WTC11 (cell line): ENCODE measurements at regions of chr5 and their contacts with region 1.

Region 1: GRCh38 chr5:138352071-138352721 is at the start of gene KDM3B:
- DNase-seq: peak; percentile 94
- ATAC-seq: peak; percentile 76
- H3K4me3 Mint-ChIP-seq: peak within 1 kb of the TSS; percentile 92
- H3K27ac Mint-ChIP-seq: peak within 1 kb of the TSS; percentile 94
- H3K4me1 Mint-ChIP-seq: peaks cover 23% of the 10 kb centered on the region
- H3K27me3 Mint-ChIP-seq: no peaks in the 10 kb centered on the region
- CTCF ChIP-seq: peak; percentile 100
- total RNA-seq, gene KDM3B: 86.2 to 89.0 TPM (median 87.9 TPM) in 3 replicates

Region 2: DNA sequence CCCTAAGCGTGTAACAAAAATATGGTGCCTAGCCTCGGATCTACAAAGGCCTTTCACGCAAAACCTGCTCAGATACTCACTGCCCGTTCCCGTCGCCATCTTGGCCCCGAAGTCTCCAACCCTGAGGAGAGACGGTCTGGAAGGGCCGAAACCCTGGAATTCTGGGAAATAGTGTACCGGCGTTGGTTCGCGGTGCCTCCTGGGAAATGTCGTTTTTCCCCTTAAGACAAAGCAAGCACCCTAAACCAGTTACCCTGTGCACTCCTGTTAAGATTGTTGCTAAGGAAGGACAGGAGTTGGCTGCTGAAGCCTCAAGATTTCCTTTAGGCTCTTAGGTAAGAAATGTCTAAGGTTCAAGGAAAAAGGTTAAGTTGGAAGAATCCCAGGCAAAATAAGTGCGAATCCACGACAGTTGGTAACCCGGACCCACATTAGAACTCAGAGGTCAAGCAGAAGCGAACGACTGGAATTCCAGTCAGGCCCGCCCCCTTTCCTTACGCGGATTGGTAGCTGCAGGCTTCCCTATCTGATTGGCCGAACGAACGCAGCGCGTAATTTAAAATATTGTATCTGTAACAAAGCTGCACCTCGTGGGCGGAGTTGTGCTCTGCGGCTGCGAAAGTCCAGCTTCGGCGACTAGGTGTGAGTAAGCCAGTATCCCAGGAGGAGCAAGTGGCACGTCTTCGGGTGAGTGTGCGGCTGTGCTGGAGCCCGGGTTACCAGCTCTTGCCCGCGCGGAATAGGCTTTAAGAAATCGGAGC is 173.5 kb before region 1 on chr5 and contains the starts of genes BRD8 and KIF20A:
- CTCF ChIA-PET with region 1: interaction called, 34 read pairs
- POLR2A ChIA-PET with region 1: interaction called, 10 read pairs
- DNase-seq: peak; percentile 96
- ATAC-seq: peak; percentile 92
- H3K4me3 Mint-ChIP-seq: no peak within 1 kb of the TSS
- H3K27ac Mint-ChIP-seq: peak within 1 kb of the TSS; percentile 63; the same call in 1 of the 2 replicates
- H3K4me1 Mint-ChIP-seq: peaks cover 13% of the 10 kb centered on the region
- H3K27me3 Mint-ChIP-seq: no peaks in the 10 kb centered on the region
- CTCF ChIP-seq: no peak
- total RNA-seq, gene BRD8: 59.6 to 73.4 TPM (median 61.4 TPM) in 3 replicates
- total RNA-seq, gene KIF20A: 66.9 to 81.9 TPM (median 68.0 TPM) in 3 replicates

Region 3: DNA sequence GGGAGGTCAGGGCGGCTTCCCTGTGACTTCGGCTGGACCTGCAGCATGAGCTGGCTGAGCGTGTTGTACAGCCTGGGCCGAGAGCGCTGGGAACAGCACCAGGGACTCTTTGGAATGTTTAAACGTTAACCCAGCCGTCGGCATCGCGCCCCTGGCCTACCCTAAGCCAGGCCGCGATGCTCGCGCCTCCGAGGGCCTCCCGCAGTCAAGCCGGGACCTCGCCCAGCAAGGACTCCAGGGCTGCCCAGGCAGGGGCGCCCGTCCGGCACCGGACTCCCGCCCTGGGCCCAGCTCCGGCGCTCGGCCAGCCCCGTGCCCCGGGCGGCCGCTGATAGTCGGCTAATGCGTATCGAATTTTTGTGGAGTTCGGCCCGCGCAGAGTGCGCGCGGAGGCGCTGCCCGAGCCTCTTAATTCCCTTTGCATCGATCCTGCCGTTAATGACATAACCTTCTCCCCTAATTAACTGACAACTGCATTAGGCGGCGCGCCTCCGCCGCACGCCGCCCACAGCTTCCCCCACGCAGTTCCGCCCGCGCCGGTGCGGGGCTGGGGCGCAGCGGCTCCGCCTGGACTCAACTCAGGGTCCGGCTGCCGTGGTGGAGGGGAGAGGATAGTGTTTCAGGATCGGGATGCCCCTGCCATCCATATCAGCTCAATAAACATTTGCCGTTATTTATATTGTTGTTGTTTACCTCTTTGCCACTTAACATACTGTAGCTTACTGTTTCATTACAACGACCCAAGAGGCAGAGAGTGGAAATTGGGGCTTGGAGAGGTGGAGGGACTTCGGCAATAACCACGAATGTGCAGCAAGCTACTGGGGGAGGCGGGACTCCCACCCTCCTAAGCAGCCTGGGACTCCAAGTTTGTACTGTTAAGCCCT is 110.3 kb before region 1 on chr5:
- CTCF ChIA-PET with region 1: interaction called, 18 read pairs
- POLR2A ChIA-PET with region 1: interaction called, 3 read pairs
- DNase-seq: peak; percentile 59
- ATAC-seq: peak; percentile 85
- H3K4me3 Mint-ChIP-seq: peak overlapping the region; percentile 64
- H3K27ac Mint-ChIP-seq: no peak overlapping the region
- H3K4me1 Mint-ChIP-seq: peaks cover 17% of the 10 kb centered on the region
- H3K27me3 Mint-ChIP-seq: peaks cover 57% of the 10 kb centered on the region
- CTCF ChIP-seq: no peak

Region 4: GRCh38 chr5:138337685-138338410 is 14.3 kb before region 1 on chr5 and contains the start of gene FAM53C:
- CTCF ChIA-PET with region 1: interaction called, 187 read pairs
- POLR2A ChIA-PET with region 1: interaction called, 61 read pairs
- DNase-seq: peak; percentile 90
- ATAC-seq: peak; percentile 83
- H3K4me3 Mint-ChIP-seq: peak within 1 kb of the TSS; percentile 92
- H3K27ac Mint-ChIP-seq: peak within 1 kb of the TSS; percentile 100
- H3K4me1 Mint-ChIP-seq: peaks cover 30% of the 10 kb centered on the region
- H3K27me3 Mint-ChIP-seq: no peaks in the 10 kb centered on the region
- CTCF ChIP-seq: no peak
- total RNA-seq, gene FAM53C: 51.3 to 56.2 TPM (median 53.0 TPM) in 3 replicates

Region 5: GRCh38 chr5:138408023-138408422 is 55.8 kb after region 1 on chr5:
- CTCF ChIA-PET with region 1: interaction called, 33 read pairs
- POLR2A ChIA-PET with region 1: interaction called, 3 read pairs
- DNase-seq: no peak
- ATAC-seq: no peak
- H3K4me3 Mint-ChIP-seq: no peak overlapping the region
- H3K27ac Mint-ChIP-seq: no peak overlapping the region
- H3K4me1 Mint-ChIP-seq: no peaks in the 10 kb centered on the region
- H3K27me3 Mint-ChIP-seq: no peaks in the 10 kb centered on the region
- CTCF ChIP-seq: no peak

Region 6: GRCh38 chr5:138449501-138450239 is 97.5 kb after region 1 on chr5:
- CTCF ChIA-PET with region 1: interaction called, 22 read pairs
- POLR2A ChIA-PET with region 1: no interaction called
- DNase-seq: peak; percentile 94
- ATAC-seq: peak; percentile 89
- H3K4me3 Mint-ChIP-seq: peak overlapping the region; percentile 51
- H3K27ac Mint-ChIP-seq: no peak overlapping the region
- H3K4me1 Mint-ChIP-seq: peaks cover 16% of the 10 kb centered on the region
- H3K27me3 Mint-ChIP-seq: no peaks in the 10 kb centered on the region; the same call in 1 of the 2 replicates
- CTCF ChIP-seq: peak; percentile 95